ENCODE measurements at regions of chr1 and their contacts with region 1.

Region 1: DNA sequence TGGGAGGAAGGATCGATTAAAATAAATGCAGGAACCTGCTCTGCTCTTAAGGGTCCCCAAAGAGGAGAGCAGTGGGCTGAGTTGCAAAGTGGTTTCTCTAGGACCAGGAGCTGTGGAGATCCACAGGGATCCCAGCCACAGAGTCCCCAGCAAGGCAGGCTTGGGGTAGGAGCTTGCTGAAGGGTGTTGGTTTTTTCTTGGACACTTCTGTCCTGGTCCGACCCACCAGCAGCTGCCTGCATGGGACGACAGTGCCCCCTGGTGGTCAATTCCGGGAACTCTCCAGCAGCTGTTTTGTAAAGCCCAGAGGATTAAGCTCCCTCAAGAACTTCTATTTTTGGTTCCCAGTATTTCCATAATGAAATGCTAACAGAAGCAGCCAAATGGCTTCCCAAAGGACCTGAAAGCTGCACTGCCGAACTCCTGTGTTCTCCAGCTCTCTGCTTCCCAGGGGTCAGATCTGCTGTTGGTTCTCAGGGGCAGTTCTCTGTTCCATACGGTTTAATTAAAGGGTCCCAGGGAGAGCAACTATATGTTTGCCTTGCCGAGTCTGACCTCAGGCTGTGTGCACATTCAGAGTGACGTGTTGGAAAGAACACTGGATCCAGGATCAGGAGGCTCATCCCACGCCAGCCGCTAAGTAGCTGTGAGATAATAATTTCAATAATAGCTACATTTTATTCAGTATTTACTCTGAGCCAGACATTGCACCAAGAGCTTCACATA is 23.2 kb downstream of the NENF start:
- DNase-seq: peak; percentile 89 to 94
- H3K4me3 ChIP-seq: no peak overlapping the region
- H3K27ac ChIP-seq: peak overlapping the region in 3 of 5 donors; percentile 38 to 55 (median 48)
- H3K4me1 ChIP-seq: peaks cover 8 to 25% (median 15%) of the 10 kb centered on the region in 4 donors
- H3K27me3 ChIP-seq: no peaks in the 10 kb centered on the region
- CTCF ChIP-seq: peak in 6 of 7 experiments; percentile 76 to 100 (median 96)
- EP300 ChIP-seq: no peak
- POLR2A ChIP-seq: no peak

Region 2: DNA sequence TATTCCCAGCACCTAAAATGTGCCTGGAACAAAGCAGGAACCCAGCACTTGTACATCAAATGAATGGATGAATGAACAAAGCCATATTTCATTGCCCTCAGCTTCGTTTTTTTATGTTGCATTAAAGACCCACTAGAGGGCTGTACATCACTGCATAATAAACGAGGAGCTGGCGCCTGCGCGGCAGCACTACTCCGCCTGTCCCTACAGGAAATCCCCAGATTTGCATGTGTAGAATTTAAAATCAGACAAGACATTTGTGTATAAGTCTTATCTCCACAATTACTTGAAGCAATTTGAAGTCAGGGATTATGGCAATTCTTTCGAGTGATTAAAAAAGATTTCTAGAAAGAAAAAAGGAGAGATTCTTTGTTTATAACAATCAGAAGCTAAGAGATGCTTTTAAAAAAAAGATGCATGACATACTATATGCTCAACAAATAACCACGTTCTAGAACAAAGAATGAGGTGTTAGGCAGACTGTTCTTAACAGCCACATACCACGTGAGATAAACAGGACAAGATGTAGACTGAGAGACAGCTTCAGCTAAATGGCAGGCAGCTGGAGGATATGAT is 775.1 kb before region 1 on chr1:
- intact Hi-C with region 1: loop called (anchors 10 kb)
- DNase-seq: peak; percentile 70 to 94
- H3K4me3 ChIP-seq: no peak overlapping the region
- H3K27ac ChIP-seq: no peak overlapping the region
- H3K4me1 ChIP-seq: peaks cover 0 to 9% (median 3%) of the 10 kb centered on the region in 4 donors
- H3K27me3 ChIP-seq: peaks cover 0 to 1% (median 0%) of the 10 kb centered on the region in 3 donors
- CTCF ChIP-seq: peak in 5 of 7 experiments; percentile 57 to 87 (median 65)
- EP300 ChIP-seq: no peak
- POLR2A ChIP-seq: no peak

Region 3: DNA sequence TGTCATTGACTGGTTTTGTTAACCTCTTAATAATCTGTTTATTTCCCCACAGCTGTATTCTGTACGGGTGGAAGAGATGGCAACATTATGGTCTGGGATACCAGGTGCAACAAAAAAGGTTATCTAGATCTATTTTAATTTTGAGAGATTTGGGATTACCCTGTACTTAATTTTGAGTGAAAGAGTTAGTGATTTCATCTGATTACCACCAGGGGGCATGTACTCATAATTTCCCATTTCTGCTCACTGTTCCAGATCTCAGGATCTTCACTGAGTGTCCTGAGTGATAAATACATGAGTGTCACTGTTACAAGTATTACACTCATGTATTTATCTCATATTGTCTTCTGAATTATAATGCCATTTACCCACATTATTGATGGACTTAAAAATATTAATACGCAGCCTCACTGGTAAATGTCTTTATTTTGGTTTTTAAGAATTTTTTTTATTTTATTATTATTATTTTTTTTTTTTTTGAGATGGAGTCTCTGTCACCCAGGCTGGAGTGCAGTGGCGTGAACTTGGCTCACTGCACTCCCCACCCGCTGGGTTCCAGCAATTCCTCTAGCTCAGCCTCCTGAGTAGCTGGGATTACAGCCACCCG is 393.0 kb before region 1 on chr1:
- intact Hi-C with region 1: loop called (anchors 10 kb)
- DNase-seq: peak in 1 of 2 donors; percentile 40
- H3K4me3 ChIP-seq: no peak overlapping the region
- H3K27ac ChIP-seq: no peak overlapping the region
- H3K4me1 ChIP-seq: peaks cover 0 to 4% (median 0%) of the 10 kb centered on the region in 4 donors
- H3K27me3 ChIP-seq: no peaks in the 10 kb centered on the region
- CTCF ChIP-seq: peak in 5 of 7 experiments; percentile 26 to 75 (median 59)
- EP300 ChIP-seq: no peak
- POLR2A ChIP-seq: no peak

Region 4: GRCh38 chr1:212368073-212368484 is 87.9 kb before region 1 on chr1:
- intact Hi-C with region 1: loop called (anchors 5 kb)
- DNase-seq: peak; percentile 64 to 80
- H3K4me3 ChIP-seq: no peak overlapping the region
- H3K27ac ChIP-seq: no peak overlapping the region
- H3K4me1 ChIP-seq: peaks cover 0 to 5% (median 0%) of the 10 kb centered on the region in 4 donors
- H3K27me3 ChIP-seq: no peaks in the 10 kb centered on the region
- CTCF ChIP-seq: peak in 5 of 7 experiments; percentile 60 to 76 (median 74)
- EP300 ChIP-seq: no peak
- POLR2A ChIP-seq: no peak

Region 5: DNA sequence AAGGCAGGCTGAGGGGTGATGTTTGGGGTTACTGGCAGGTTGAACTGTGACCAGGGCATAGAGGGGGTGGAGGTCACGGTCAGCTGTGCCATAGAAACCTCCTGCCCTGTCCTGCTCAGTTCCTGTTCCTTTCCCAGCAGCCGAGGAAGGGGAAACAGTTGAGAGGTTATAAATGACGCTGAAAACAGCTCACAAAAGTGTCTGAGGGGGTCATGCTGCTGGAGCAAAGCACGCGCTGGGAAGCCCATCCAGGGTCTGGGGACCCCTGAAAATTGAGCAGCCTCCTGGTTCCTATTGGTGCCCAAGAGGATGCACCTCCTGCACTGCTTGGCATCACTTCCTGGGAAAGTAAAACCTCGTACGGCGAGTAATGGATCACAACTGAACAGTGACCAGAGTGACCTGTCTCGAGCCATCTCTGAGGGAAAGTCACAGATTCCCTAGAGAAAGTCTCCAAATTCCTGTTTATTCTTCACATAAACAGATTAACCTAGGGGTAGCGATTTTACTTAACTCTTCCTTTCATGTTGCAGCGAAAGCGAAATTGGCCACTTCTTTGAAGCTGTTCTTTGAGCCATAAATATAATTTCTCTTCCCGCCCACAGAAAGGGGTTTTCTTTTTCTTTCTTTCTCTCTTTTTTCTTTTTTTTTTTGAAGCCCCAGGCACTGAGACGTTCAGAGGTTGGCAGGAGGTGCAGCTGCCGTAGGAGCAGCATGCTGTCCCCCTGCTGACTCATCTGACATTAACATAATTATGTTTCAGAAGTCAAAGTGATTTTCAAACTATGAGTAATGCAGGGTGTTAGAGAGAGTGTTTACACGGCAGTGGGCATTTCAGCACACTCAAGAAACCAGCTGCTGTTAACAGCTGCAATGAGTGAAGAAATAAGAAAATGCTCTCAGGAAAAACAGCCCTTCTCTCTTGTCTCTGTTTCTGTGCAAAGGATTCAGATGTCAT is 110.8 kb after region 1 on chr1:
- intact Hi-C with region 1: no loop called
- DNase-seq: peak; percentile 34 to 84
- H3K4me3 ChIP-seq: peak overlapping the region; percentile 29 to 48 (median 40)
- H3K27ac ChIP-seq: peak overlapping the region; percentile 31 to 80 (median 75)
- H3K4me1 ChIP-seq: peaks cover 7 to 22% (median 12%) of the 10 kb centered on the region in 4 donors
- H3K27me3 ChIP-seq: no peaks in the 10 kb centered on the region
- CTCF ChIP-seq: no peak
- EP300 ChIP-seq: no peak
- POLR2A ChIP-seq: no peak

Measured in stomach (tissue), 19 donors.